ENCODE measurements at regions of chr12 and their contacts with region 1.

Region 1: DNA sequence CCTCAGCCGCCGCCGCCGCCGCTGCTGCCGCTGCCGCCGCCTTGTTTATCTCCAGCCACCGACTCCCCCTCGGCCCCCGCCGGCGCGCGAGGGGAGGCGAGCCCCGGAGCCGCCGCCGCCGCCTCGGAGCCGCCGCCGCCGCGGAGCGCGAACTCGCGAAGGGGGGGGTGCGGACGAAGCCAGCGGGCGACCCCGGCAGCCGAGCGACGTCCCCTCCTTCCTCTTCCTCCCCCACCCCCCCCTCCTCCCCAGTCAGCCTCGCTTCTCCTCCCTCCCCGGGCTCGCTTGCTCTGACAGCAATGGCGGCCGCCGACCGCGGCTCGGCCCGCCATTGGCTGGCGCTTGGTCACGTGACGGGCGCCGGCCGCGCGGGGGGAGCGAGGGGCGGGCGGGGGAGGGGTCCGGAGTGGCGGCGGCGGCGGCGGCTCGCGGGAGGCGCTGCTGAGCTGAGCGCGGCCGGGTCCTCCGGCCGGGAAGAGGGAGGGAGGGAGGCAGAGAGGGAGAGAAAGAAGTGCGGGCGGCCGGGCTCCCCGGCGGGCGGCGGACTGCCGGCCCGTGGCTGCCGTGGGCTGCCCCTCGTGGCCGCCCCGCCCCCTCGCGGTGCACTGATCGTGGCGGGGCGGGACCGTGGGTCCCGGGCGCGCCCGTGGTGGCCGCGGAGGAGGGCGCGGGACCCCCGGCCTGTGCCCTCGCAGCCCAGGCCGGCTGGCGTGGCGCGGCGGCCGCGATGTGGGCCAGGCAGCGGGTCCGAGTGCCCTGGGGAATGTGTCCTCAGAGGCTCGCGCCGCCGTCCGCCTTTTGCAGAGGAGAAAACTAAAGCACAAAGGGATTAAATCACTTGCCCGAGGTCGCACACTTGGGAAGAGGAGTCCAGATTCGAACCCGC is at the start of gene MED13L:
- DNase-seq: peak; percentile 86
- H3K4me3 Mint-ChIP-seq: peak within 1 kb of the TSS; percentile 99
- H3K27ac Mint-ChIP-seq: peak within 1 kb of the TSS; percentile 96
- H3K4me1 Mint-ChIP-seq: peaks cover 62% of the 10 kb centered on the region
- H3K27me3 Mint-ChIP-seq: peaks cover 12% of the 10 kb centered on the region
- total RNA-seq, gene MED13L: 65.5 and 66.1 TPM in 2 replicates

Region 2: GRCh38 chr12:115998119-115998633 is 279.5 kb before region 1 on chr12:
- intact Hi-C with region 1: loop called (anchors 5 kb)
- DNase-seq: no peak
- H3K4me3 Mint-ChIP-seq: no peak overlapping the region
- H3K27ac Mint-ChIP-seq: no peak overlapping the region
- H3K4me1 Mint-ChIP-seq: no peaks in the 10 kb centered on the region
- H3K27me3 Mint-ChIP-seq: no peaks in the 10 kb centered on the region

Region 3: DNA sequence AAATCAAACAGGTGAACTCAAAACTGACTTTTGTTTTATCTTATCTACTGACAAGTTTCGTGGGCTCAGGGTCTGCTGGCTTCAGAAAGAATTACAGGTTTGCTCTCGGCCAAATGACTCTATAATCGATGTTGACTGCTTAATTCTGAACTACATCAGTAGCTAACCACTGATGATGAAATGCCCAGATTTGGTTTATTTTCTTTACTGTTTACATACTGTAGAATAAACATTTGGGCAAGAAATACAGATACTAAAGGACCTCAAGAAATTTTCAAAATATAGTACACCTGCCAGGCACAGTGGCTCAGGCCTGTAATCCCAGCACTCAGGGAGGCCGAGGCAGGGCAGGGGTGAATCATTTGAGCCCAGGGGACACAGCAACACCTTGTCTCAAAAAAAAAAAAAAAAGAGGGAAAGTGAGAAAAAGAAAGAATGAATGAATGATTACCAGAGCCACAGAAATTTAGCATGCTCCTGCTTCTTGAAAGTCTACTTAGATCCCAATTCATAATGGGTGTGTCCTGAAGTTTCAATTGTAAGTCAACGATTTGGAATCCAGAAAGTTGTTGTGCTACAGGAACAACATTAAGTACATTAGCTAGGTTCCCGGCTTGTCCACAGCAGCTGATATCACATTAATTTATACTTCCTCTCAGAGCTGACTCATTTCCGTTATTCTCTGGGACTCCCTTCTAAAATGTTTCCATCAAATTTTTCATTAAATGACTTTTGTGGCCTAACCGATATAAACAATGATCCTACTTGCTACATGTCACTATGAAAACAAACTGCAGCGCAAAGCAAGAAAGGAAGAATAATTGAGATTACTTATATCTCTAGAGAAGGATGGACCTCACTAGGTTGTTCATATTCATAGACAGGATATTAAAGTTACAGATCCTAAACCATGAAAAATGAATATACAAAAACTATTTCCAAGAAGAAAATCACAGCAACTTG is 134.4 kb before region 1 on chr12:
- intact Hi-C with region 1: loop called (anchors 2 kb)
- DNase-seq: no peak
- H3K4me3 Mint-ChIP-seq: peak overlapping the region; percentile 45
- H3K27ac Mint-ChIP-seq: peak overlapping the region; percentile 81
- H3K4me1 Mint-ChIP-seq: peaks cover 52% of the 10 kb centered on the region
- H3K27me3 Mint-ChIP-seq: no peaks in the 10 kb centered on the region

Region 4: GRCh38 chr12:116226026-116226425 is 51.6 kb before region 1 on chr12:
- intact Hi-C with region 1: no loop called
- DNase-seq: no peak
- H3K4me3 Mint-ChIP-seq: no peak overlapping the region
- H3K27ac Mint-ChIP-seq: no peak overlapping the region
- H3K4me1 Mint-ChIP-seq: peaks cover 8% of the 10 kb centered on the region
- H3K27me3 Mint-ChIP-seq: no peaks in the 10 kb centered on the region

Region 5: GRCh38 chr12:116266168-116266601 is 11.5 kb before region 1 on chr12:
- intact Hi-C with region 1: no loop called
- DNase-seq: no peak
- H3K4me3 Mint-ChIP-seq: no peak overlapping the region
- H3K27ac Mint-ChIP-seq: no peak overlapping the region
- H3K4me1 Mint-ChIP-seq: peaks cover 23% of the 10 kb centered on the region
- H3K27me3 Mint-ChIP-seq: peaks cover 3% of the 10 kb centered on the region

Region 6: DNA sequence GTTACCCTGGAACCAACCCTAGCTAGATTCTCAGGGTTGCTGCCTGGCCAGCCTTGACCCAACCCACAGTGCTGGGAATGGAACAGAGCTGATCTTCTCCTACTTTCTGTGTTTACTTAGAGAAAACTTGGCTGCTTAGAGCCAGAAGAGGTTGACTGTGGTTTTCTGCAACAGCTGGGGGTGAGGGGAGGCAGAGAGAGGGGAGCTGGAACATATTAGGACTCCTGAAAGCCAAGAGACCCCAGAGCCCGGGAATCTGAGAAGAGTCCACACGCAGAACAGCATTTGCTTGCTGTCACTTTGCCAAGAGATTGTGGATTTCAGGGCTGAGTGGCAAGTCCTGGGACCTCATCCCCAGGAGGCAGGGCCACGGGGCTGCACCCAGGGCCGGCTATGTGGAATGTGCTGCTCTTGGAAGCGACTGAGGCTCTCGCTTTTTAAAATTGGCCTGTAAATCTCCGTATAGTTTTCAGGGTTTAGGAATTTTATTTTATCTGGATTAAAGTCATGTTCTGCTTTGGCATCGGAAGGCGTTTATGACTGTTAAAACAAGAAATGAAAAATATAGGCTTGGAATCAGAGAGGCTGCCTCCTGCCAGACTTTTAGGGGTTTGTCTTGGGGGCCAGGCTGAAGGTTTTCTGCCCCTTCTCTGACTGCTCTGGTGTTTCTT is 22.2 kb after region 1 on chr12:
- intact Hi-C with region 1: no loop called
- DNase-seq: no peak
- H3K4me3 Mint-ChIP-seq: no peak overlapping the region
- H3K27ac Mint-ChIP-seq: no peak overlapping the region
- H3K4me1 Mint-ChIP-seq: no peaks in the 10 kb centered on the region
- H3K27me3 Mint-ChIP-seq: peaks cover 22% of the 10 kb centered on the region

Region 7: DNA sequence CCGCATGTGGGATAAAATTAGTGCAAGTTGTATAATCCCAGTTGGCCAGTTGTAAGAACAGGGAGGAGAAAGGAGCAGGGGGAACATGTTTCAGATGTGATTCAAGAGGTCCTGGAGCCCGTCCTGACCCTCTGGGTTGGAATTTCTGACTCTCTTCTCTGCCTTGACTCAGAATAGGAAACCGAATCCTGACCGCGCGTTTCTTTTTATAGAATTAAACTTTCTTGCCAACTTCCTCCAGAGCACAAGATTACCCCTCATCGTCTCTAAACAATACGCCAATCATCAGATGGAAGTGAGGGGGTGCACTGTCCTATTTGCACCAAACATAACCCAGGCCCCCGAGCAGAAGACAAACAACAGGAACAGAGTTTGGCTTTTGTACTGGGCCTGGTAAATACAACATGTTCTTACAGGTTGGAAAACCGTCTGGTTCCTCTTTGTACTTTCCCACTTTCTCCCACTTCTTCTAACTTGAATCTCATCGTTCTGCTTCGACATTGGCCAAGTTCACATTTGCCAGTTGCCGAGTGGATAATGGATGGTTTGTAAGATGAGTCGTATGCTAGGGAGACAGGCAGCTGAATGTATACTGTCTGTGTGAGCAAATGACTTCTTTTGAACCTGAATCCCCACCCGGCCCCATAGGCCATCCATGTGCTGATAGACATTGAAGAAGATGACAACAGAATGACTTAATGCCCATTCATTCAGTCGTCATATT is 42.4 kb after region 1 on chr12:
- intact Hi-C with region 1: loop called (anchors 1 kb)
- DNase-seq: peak; percentile 17
- H3K4me3 Mint-ChIP-seq: peak overlapping the region; percentile 73
- H3K27ac Mint-ChIP-seq: peak overlapping the region; percentile 84
- H3K4me1 Mint-ChIP-seq: peaks cover 50% of the 10 kb centered on the region
- H3K27me3 Mint-ChIP-seq: peaks cover 3% of the 10 kb centered on the region

Region 8: DNA sequence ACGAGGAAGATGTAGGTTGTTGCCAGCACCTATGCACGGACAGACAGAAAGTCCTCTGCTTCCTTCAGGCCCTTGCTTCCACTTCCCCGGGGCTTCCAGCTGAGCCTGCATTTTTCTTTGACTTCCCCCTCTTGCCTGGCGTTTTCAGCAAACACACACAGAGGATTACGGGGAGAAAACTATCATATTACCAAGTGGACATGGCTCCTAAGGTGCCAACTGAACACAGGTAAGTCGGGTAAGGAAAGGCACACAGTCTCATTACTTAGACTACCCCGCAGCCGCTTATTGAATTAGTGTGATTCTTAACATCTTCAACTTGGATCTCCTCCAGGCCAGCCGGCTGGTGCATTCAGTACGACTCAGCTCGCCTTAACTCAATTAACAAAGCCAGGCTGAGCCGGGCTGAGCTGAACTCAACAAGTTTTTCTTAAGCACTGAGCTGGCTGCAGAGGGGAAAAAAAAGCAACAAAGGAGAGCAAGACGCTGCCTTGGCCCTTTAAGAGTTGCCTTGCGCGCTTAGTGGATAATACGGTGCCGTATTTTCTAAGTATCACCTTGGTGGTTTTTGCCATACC is 262.4 kb after region 1 on chr12:
- intact Hi-C with region 1: loop called (anchors 5 kb)
- DNase-seq: no peak
- H3K4me3 Mint-ChIP-seq: no peak overlapping the region
- H3K27ac Mint-ChIP-seq: no peak overlapping the region
- H3K4me1 Mint-ChIP-seq: peaks cover 37% of the 10 kb centered on the region
- H3K27me3 Mint-ChIP-seq: peaks cover 7% of the 10 kb centered on the region

Region 9: DNA sequence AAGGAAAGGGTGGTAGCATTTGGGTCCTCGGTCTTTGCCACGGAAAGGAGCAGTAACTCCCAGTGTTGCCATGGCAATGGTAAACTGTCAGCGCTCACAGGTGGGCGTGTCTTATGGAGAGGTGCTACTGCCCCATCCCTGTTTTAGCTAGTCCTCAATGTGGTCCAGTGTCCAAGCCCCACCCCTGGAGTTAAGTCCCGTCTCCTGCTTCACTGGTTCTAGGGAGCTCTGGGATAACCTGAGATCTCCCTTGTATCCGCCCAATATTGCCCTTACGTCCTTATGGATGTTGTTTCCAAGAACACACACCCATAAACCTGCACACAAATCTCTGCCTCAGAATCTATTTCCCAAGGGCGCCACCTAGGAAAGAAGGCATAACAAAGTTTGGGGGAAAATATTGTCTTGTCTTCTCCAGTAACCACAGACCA is 396.1 kb after region 1 on chr12:
- intact Hi-C with region 1: loop called (anchors 2 kb)
- DNase-seq: no peak
- H3K4me3 Mint-ChIP-seq: peak overlapping the region; percentile 34
- H3K27ac Mint-ChIP-seq: peak overlapping the region; percentile 55
- H3K4me1 Mint-ChIP-seq: peaks cover 49% of the 10 kb centered on the region
- H3K27me3 Mint-ChIP-seq: no peaks in the 10 kb centered on the region

Measured in activated T-helper 1 cell treated with anti-CD3 and anti-CD28 coated beads, Interleukin-12 subunit alpha, Interleukin-12 subunit beta, Interleukin-2, Interleukin-4 antibody, amounts not matched to agents 30 ng/mL and 10 ng/mL and 1 ng/mL, durations not matched to agents 14 hours and 24 hours and 36 hours (primary cell).